ENCODE measurements at regions of chr17 and their contacts with region 1.

Region 1: GRCh38 chr17:37239690-37240334 is 136.0 kb upstream of the C17orf78 start:
- DNase-seq: no peak
- ATAC-seq: no peak
- H3K4me3 Mint-ChIP-seq: no peak overlapping the region
- H3K27ac Mint-ChIP-seq: no peak overlapping the region
- H3K4me1 Mint-ChIP-seq: no peaks in the 10 kb centered on the region
- H3K27me3 Mint-ChIP-seq: no peaks in the 10 kb centered on the region
- CTCF ChIP-seq: peak; percentile 63

Region 2: DNA sequence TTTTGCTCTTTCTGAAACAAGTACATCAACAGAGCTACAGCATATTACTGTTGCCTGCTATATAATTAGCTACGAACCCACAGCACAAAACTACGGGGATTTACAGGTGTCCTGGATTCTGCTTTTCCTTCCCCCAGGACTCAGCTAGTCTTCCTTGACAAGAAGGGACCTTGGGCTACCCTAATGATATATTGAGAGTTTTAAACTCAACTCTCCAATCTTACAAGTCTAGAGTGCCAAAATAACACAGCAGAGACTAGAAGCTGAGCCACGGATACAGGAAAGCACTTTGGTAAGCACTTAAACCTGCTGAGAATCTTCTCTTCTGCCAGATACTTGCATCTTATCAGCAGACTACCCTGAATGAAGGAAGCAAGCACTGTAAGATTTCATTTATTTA is 25.4 kb before region 1 on chr17:
- CTCF ChIA-PET with region 1: interaction called, 11 read pairs
- POLR2A ChIA-PET with region 1: no interaction called
- intact Hi-C with region 1: no loop called
- DNase-seq: no peak
- ATAC-seq: no peak
- H3K4me3 Mint-ChIP-seq: no peak overlapping the region
- H3K27ac Mint-ChIP-seq: no peak overlapping the region
- H3K4me1 Mint-ChIP-seq: no peaks in the 10 kb centered on the region
- H3K27me3 Mint-ChIP-seq: no peaks in the 10 kb centered on the region
- CTCF ChIP-seq: no peak

Region 3: DNA sequence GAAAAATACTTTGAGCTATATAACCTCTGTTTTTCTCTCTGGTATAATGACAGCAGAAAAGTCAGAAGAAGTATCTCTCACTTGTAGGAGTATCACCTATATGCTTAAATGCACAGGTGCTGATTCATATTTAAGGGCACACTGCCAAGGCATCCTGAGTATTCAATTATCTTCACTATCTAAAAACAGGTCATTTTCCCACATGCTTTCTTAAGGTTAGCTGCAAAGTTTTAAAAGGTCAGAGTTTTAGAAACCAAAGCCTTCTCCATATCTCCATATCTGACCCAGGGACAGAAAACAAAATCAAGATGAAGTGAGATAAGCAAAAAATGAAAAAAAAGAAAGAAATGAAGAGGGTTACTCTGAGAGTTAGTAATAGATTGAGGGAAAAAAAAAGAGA is 36.7 kb after region 1 on chr17:
- CTCF ChIA-PET with region 1: no interaction called
- POLR2A ChIA-PET with region 1: no interaction called
- intact Hi-C with region 1: no loop called
- DNase-seq: no peak
- ATAC-seq: no peak
- H3K4me3 Mint-ChIP-seq: no peak overlapping the region
- H3K27ac Mint-ChIP-seq: no peak overlapping the region
- H3K4me1 Mint-ChIP-seq: peaks cover 4% of the 10 kb centered on the region
- H3K27me3 Mint-ChIP-seq: no peaks in the 10 kb centered on the region
- CTCF ChIP-seq: no peak

Region 4: DNA sequence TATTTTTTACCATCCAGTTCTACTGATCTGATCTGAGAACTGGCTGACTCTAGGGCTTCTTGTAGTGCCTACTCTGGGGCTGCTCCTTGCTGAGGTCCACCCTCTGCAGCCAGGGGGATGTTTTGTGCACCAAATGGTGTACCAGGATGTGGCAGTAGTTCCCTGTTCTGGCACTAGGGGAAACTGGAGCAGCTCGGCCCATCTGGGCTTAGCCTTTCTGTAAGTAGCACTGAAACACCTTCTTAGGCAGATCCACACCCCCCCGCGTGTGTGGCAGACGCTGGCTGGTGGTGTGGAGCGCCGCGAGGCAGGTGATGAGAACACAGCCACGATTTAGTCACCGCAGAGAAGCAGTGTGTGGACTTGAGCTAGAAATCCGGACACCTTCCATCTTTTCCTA is 266.9 kb after region 1 on chr17:
- CTCF ChIA-PET with region 1: no interaction called
- POLR2A ChIA-PET with region 1: no interaction called
- intact Hi-C with region 1: no loop called
- DNase-seq: peak; percentile 52
- ATAC-seq: peak; percentile 81
- H3K4me3 Mint-ChIP-seq: no peak overlapping the region
- H3K27ac Mint-ChIP-seq: no peak overlapping the region
- H3K4me1 Mint-ChIP-seq: peaks cover 15% of the 10 kb centered on the region
- H3K27me3 Mint-ChIP-seq: no peaks in the 10 kb centered on the region
- CTCF ChIP-seq: peak; percentile 46

Measured in activated CD8-positive, alpha-beta T cell treated with anti-CD3 and anti-CD28 coated beads for 36 hours (primary cell).